Activated CD4-positive, alpha-beta T cell treated with anti-CD3 and anti-CD28 coated beads for 36 hours (primary cell): ENCODE measurements at regions of chr2 and their contacts with region 1.

Region 1: GRCh38 chr2:173210270-173211196 is 134.9 kb downstream of the MAP3K20 start:
- DNase-seq: peak; percentile 70
- ATAC-seq: peak; percentile 65
- H3K4me3 Mint-ChIP-seq: no peak overlapping the region
- H3K27ac Mint-ChIP-seq: no peak overlapping the region
- H3K4me1 Mint-ChIP-seq: no peaks in the 10 kb centered on the region
- H3K27me3 Mint-ChIP-seq: peaks cover 9% of the 10 kb centered on the region

Region 2: DNA sequence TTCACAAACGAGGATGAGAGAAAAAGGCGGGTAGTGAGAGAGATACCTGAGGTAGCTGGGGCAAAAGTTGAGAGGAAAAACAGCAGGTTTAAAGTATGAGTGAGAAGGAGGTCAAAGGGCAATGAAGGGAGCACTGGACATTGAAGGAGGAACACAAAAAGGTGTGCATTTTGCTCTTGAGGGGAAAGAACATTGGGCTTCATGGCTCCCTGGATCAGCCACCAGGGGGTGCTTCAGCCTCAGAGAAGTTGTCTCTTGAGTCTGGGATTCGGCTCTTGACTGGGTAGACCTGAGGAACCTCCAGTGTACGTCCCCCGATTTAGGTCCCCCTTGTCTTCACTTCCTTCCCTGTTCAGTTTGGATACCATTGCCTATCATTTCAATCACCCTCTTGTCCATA is 346.4 kb before region 1 on chr2:
- CTCF ChIA-PET with region 1: no interaction called
- POLR2A ChIA-PET with region 1: no interaction called
- intact Hi-C with region 1: loop called (anchors 2 to 10 kb)
- DNase-seq: peak; percentile 79
- ATAC-seq: peak; percentile 36
- H3K4me3 Mint-ChIP-seq: no peak overlapping the region
- H3K27ac Mint-ChIP-seq: no peak overlapping the region
- H3K4me1 Mint-ChIP-seq: no peaks in the 10 kb centered on the region
- H3K27me3 Mint-ChIP-seq: peaks cover 5% of the 10 kb centered on the region

Region 3: DNA sequence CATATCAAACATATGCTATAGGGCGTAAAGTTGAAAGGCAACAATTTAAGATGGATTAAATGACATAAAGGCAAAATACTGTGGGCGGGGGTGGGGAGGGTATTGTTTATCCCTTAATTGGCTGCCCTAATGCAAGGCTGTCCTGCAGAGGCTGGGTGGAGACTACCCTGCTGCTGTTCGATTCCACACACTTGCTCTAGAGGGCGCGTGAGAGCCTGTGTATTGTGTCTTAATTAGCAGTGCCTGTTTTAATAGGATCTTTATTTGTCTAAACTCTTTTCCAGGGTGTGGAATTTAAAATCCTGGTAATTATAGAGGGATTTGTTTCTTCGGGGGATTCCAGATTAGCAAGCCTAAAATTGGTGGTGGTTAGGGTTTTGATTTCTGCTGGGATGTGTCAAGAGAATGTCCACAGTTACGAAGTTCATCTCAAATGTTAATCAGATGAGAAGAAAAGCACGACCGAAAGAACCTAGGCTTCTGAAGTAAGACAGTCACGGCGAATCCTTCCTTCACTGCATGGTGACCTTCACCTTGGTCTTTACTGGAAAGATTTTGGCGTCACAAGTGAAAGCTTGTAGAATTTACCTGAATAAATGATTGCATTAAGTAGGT is 238.4 kb before region 1 on chr2:
- CTCF ChIA-PET with region 1: interaction called, 6 read pairs
- POLR2A ChIA-PET with region 1: no interaction called
- intact Hi-C with region 1: loop called in 1 of 2 experiments (anchors 2 kb)
- DNase-seq: peak; percentile 71
- ATAC-seq: peak; percentile 73
- H3K4me3 Mint-ChIP-seq: no peak overlapping the region
- H3K27ac Mint-ChIP-seq: no peak overlapping the region
- H3K4me1 Mint-ChIP-seq: peaks cover 34% of the 10 kb centered on the region
- H3K27me3 Mint-ChIP-seq: no peaks in the 10 kb centered on the region

Region 4: DNA sequence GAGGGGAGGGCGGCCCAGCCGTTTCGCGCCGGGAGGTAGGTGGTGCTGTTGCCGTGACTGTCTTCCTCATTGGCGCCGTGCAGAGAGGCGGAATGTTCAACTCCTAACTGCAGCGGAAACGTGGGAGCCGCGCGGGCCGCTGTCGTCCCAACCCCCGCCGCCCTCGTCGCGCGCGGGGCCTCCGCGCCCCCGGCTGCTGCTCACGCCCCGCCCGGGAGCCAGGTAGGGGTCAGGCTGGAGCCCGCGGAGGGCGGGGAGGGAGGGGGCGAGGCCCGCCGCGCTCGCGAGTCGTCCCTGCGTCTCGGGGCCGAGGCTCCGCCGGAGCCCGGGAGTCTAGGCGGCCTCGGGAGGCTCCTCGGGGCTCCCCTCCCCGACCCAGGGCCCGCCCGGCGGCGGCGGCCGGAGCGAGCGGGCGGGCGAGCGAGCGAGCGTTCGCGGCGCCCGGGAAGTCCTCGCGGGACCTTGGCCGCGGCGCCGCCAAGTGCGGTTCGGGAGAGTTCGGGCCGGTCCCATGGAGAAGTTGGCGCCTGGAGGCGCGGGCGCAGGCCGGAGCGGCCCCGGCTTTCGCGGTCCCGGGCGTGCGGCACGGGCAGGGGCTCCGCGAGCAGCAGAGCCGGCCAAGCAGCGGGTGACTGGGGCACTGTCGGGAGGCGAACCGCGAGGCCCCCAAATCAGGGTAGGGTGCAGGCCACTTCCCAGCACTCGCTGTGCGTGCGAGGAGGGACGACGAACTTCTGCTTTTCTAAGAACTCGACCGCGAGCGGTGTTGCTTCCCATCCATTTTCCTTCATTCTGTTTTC is 134.6 kb before region 1 on chr2 and contains the start of gene MAP3K20:
- CTCF ChIA-PET with region 1: interaction called, 5 read pairs
- POLR2A ChIA-PET with region 1: no interaction called
- intact Hi-C with region 1: loop called (anchors 1 kb)
- DNase-seq: peak; percentile 73
- ATAC-seq: peak; percentile 85
- H3K4me3 Mint-ChIP-seq: peak within 1 kb of the TSS; percentile 76
- H3K27ac Mint-ChIP-seq: peak within 1 kb of the TSS; percentile 76
- H3K4me1 Mint-ChIP-seq: peaks cover 22% of the 10 kb centered on the region
- H3K27me3 Mint-ChIP-seq: peaks cover 33% of the 10 kb centered on the region
- total RNA-seq, gene MAP3K20: 8.1 to 8.4 TPM

Region 5: GRCh38 chr2:173175222-173175621 is 35.3 kb before region 1 on chr2:
- CTCF ChIA-PET with region 1: no interaction called
- POLR2A ChIA-PET with region 1: no interaction called
- intact Hi-C with region 1: no loop called
- DNase-seq: no peak
- ATAC-seq: no peak
- H3K4me3 Mint-ChIP-seq: no peak overlapping the region
- H3K27ac Mint-ChIP-seq: no peak overlapping the region
- H3K4me1 Mint-ChIP-seq: no peaks in the 10 kb centered on the region
- H3K27me3 Mint-ChIP-seq: peaks cover 9% of the 10 kb centered on the region